ENCODE measurements at regions of chr3 and their contacts with region 1.

Region 1: GRCh38 chr3:133927540-133928066 is 31.9 kb upstream of the RAB6B start:
- DNase-seq: peak; percentile 54 to 83 (median 64)
- ATAC-seq: peak in 3 of 4 donors; percentile 69 to 89 (median 78)
- H3K4me3 ChIP-seq: peak overlapping the region; percentile 30 to 74 (median 56)
- H3K27ac ChIP-seq: no peak overlapping the region
- H3K4me1 ChIP-seq: peaks cover 0 to 18% (median 8%) of the 10 kb centered on the region in 12 donors
- H3K27me3 ChIP-seq: peaks cover 0 to 3% (median 0%) of the 10 kb centered on the region in 9 donors
- CTCF ChIP-seq: peak; percentile 48 to 98 (median 80)
- POLR2A ChIP-seq: no peak

Region 2: GRCh38 chr3:133661454-133662277 is 265.9 kb before region 1 on chr3 and contains the start of gene TOPBP1:
- intact Hi-C with region 1: loop called in 6 of 10 experiments (anchors 2 to 10 kb)
- DNase-seq: peak; percentile 81 to 90 (median 84)
- ATAC-seq: peak; percentile 57 to 95 (median 94)
- H3K4me3 ChIP-seq: peak within 1 kb of the TSS; percentile 75 to 92 (median 85)
- H3K27ac ChIP-seq: peak within 1 kb of the TSS; percentile 50 to 92 (median 82)
- H3K4me1 ChIP-seq: peaks cover 0 to 30% (median 15%) of the 10 kb centered on the region in 12 donors
- H3K27me3 ChIP-seq: no peaks in the 10 kb centered on the region
- CTCF ChIP-seq: no peak
- POLR2A ChIP-seq: peak in 1 of 2 donors; percentile 12
- total RNA-seq, gene TOPBP1: 7.9 to 18.3 (median 11.8) TPM

Region 3: GRCh38 chr3:133821767-133822638 is 105.6 kb before region 1 on chr3:
- intact Hi-C with region 1: loop called (anchors 1 to 5 kb)
- DNase-seq: peak in 4 of 5 donors; percentile 71 to 89 (median 78)
- ATAC-seq: peak in 3 of 4 donors; percentile 44 to 80 (median 48)
- H3K4me3 ChIP-seq: no peak overlapping the region
- H3K27ac ChIP-seq: peak overlapping the region in 2 of 12 donors; percentile 2 to 23
- H3K4me1 ChIP-seq: peaks cover 0 to 11% (median 4%) of the 10 kb centered on the region in 12 donors
- H3K27me3 ChIP-seq: no peaks in the 10 kb centered on the region
- CTCF ChIP-seq: peak in 6 of 12 donors; percentile 11 to 61 (median 32)
- POLR2A ChIP-seq: no peak

Region 4: GRCh38 chr3:133868758-133869475 is 58.7 kb before region 1 on chr3:
- intact Hi-C with region 1: no loop called
- DNase-seq: no peak
- ATAC-seq: peak in 3 of 4 donors; percentile 45 to 71 (median 57)
- H3K4me3 ChIP-seq: no peak overlapping the region
- H3K27ac ChIP-seq: peak overlapping the region in 2 of 12 donors; percentile 29 to 34
- H3K4me1 ChIP-seq: peaks cover 0 to 24% (median 0%) of the 10 kb centered on the region in 12 donors
- H3K27me3 ChIP-seq: no peaks in the 10 kb centered on the region
- CTCF ChIP-seq: no peak
- POLR2A ChIP-seq: no peak

Region 5: GRCh38 chr3:133991637-133992036 is 64.0 kb after region 1 on chr3:
- intact Hi-C with region 1: no loop called
- DNase-seq: no peak
- ATAC-seq: peak; percentile 11 to 44 (median 30)
- H3K4me3 ChIP-seq: no peak overlapping the region
- H3K27ac ChIP-seq: peak overlapping the region in 10 of 12 donors; percentile 8 to 60 (median 35)
- H3K4me1 ChIP-seq: peaks cover 0 to 55% (median 17%) of the 10 kb centered on the region in 12 donors
- H3K27me3 ChIP-seq: peaks cover 0 to 5% (median 0%) of the 10 kb centered on the region in 9 donors
- CTCF ChIP-seq: no peak
- POLR2A ChIP-seq: no peak

Region 6: GRCh38 chr3:134018406-134018805 is 90.8 kb after region 1 on chr3:
- intact Hi-C with region 1: no loop called
- DNase-seq: no peak
- ATAC-seq: peak in 2 of 4 donors; percentile 41 to 44
- H3K4me3 ChIP-seq: no peak overlapping the region
- H3K27ac ChIP-seq: no peak overlapping the region
- H3K4me1 ChIP-seq: peaks cover 0 to 12% (median 0%) of the 10 kb centered on the region in 12 donors
- H3K27me3 ChIP-seq: no peaks in the 10 kb centered on the region
- CTCF ChIP-seq: no peak
- POLR2A ChIP-seq: no peak

Region 7: GRCh38 chr3:134161898-134162615 is 234.5 kb after region 1 on chr3:
- intact Hi-C with region 1: loop called in 1 of 10 experiments (anchors 10 kb)
- DNase-seq: no peak
- ATAC-seq: no peak
- H3K4me3 ChIP-seq: no peak overlapping the region
- H3K27ac ChIP-seq: no peak overlapping the region
- H3K4me1 ChIP-seq: no peaks in the 10 kb centered on the region
- H3K27me3 ChIP-seq: no peaks in the 10 kb centered on the region
- CTCF ChIP-seq: no peak
- POLR2A ChIP-seq: no peak

Region 8: GRCh38 chr3:134299185-134299887 is 371.7 kb after region 1 on chr3:
- intact Hi-C with region 1: loop called in 1 of 10 experiments (anchors 5 kb)
- DNase-seq: no peak
- ATAC-seq: peak; percentile 44 to 76 (median 70)
- H3K4me3 ChIP-seq: no peak overlapping the region
- H3K27ac ChIP-seq: no peak overlapping the region
- H3K4me1 ChIP-seq: peaks cover 0 to 5% (median 0%) of the 10 kb centered on the region in 12 donors
- H3K27me3 ChIP-seq: no peaks in the 10 kb centered on the region
- CTCF ChIP-seq: peak in 10 of 12 donors; percentile 14 to 56 (median 36)
- POLR2A ChIP-seq: no peak

Measured in heart left ventricle (tissue), 16 donors.